Activated T-helper 1 cell treated with anti-CD3 and anti-CD28 coated beads, Interleukin-12 subunit alpha, Interleukin-12 subunit beta, Interleukin-2, Interleukin-4 antibody, amounts not matched to agents 30 ng/mL and 10 ng/mL and 1 ng/mL, durations not matched to agents 14 hours and 24 hours and 36 hours (primary cell): ENCODE measurements at regions of chr2 and their contacts with region 1.

Region 1: DNA sequence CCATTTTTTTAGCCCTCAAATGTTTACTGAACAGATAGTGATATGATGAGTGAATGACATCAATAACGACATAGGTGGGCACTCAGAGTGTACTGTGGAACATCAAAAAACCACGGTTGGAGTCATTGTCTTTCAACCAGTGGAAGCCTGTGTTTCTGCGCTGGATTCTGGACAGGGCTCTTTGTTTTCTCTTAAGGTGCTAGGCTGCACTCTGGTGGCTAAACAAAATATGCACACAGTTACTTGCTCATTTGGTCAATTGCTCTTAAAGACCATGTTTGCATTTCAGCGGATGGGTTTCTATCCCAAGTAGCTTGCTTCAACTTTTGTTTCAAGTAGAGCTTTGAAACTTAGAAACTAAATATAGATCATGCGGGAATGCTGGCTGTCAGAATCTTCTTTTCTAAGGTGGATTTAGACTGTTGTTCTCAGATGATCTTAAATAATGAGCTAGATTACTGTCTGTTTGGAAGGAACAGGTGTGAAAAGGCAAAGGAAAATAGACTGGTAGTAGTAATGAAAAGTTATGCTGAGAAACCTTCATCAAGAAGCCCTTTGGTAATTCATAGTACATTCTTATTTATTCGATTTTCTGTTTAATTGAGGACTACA is 48.5 kb upstream of the LYPD6B start:
- DNase-seq: peak; percentile 30
- H3K4me3 Mint-ChIP-seq: no peak overlapping the region
- H3K27ac Mint-ChIP-seq: no peak overlapping the region
- H3K4me1 Mint-ChIP-seq: peaks cover 4% of the 10 kb centered on the region
- H3K27me3 Mint-ChIP-seq: no peaks in the 10 kb centered on the region

Region 2: DNA sequence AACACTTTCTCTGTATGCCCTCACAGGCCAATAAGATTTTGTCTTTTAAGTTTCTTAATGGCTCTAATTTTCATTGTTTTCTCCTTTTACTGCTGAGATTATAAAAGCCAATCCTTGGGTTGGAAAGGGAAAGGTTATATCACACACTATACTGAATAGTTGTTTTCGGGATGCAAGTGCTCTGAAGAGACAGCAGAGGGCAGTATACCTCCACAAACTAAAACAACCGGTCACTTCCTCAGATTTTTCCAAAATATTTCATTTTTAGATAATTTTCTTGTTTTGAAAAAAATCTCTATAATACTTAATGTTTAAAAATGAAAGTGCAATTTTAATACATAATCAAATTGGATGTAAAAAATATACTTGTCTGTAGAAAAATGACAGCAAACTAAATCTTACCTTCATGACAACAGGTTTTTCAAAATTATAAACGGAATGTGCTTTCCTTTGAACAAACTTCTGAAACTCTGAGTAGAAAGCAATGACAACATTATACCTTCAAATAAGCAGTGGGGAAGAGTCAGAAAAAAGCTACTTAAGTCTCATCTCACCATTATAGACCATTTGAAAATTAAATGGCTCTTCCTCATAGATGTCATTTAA is 1052.1 kb before region 1 on chr2:
- intact Hi-C with region 1: loop called (anchors 1 kb)
- DNase-seq: no peak
- H3K4me3 Mint-ChIP-seq: no peak overlapping the region
- H3K27ac Mint-ChIP-seq: no peak overlapping the region
- H3K4me1 Mint-ChIP-seq: no peaks in the 10 kb centered on the region
- H3K27me3 Mint-ChIP-seq: no peaks in the 10 kb centered on the region

Region 3: GRCh38 chr2:147989809-147990403 is 1000.1 kb before region 1 on chr2:
- intact Hi-C with region 1: loop called (anchors 1 kb)
- DNase-seq: no peak
- H3K4me3 Mint-ChIP-seq: no peak overlapping the region
- H3K27ac Mint-ChIP-seq: no peak overlapping the region
- H3K4me1 Mint-ChIP-seq: peaks cover 6% of the 10 kb centered on the region
- H3K27me3 Mint-ChIP-seq: no peaks in the 10 kb centered on the region

Region 4: GRCh38 chr2:148201075-148202004 is 788.6 kb before region 1 on chr2:
- intact Hi-C with region 1: loop called (anchors 1 kb)
- DNase-seq: peak; percentile 13
- H3K4me3 Mint-ChIP-seq: no peak overlapping the region
- H3K27ac Mint-ChIP-seq: no peak overlapping the region
- H3K4me1 Mint-ChIP-seq: no peaks in the 10 kb centered on the region
- H3K27me3 Mint-ChIP-seq: no peaks in the 10 kb centered on the region

Region 5: GRCh38 chr2:148926291-148926961 is 63.6 kb before region 1 on chr2:
- intact Hi-C with region 1: loop called (anchors 1 kb)
- DNase-seq: peak; percentile 52
- H3K4me3 Mint-ChIP-seq: peak overlapping the region; percentile 87
- H3K27ac Mint-ChIP-seq: peak overlapping the region; percentile 86
- H3K4me1 Mint-ChIP-seq: peaks cover 26% of the 10 kb centered on the region
- H3K27me3 Mint-ChIP-seq: no peaks in the 10 kb centered on the region